K562 (cell line): ENCODE measurements at regions of chr3 and their contacts with region 1.

Region 1: GRCh38 chr3:186760141-186760813 is 23.1 kb upstream of the EIF4A2 start:
- DNase-seq: no peak
- ATAC-seq: no peak
- H3K4me3 ChIP-seq: no peak overlapping the region
- H3K27ac ChIP-seq: no peak overlapping the region
- H3K4me1 ChIP-seq: peaks cover 0 to 2% of the 10 kb centered on the region in 2 experiments; a peak in 2 of 5 replicates
- H3K27me3 ChIP-seq: peaks cover 2 to 11% of the 10 kb centered on the region in 2 experiments; a peak in 3 of 5 replicates
- CTCF ChIP-seq: no peak
- EP300 ChIP-seq: no peak
- POLR2A ChIP-seq: no peak
- RAD21 ChIP-seq: no peak

Region 2: GRCh38 chr3:186694288-186695032 is 65.8 kb before region 1 on chr3:
- CTCF ChIA-PET with region 1: no interaction called
- POLR2A ChIA-PET with region 1: no interaction called
- in situ Hi-C with region 1: no loop called
- intact Hi-C with region 1: no loop called
- DNase-seq: no peak
- ATAC-seq: no peak
- H3K4me3 ChIP-seq: no peak overlapping the region
- H3K27ac ChIP-seq: no peak overlapping the region
- H3K4me1 ChIP-seq: peaks cover 0 to 5% of the 10 kb centered on the region in 2 experiments; a peak in 2 of 5 replicates
- H3K27me3 ChIP-seq: peaks cover 8 to 21% of the 10 kb centered on the region in 2 experiments
- CTCF ChIP-seq: no peak
- EP300 ChIP-seq: no peak
- POLR2A ChIP-seq: no peak
- RAD21 ChIP-seq: no peak

Region 3: DNA sequence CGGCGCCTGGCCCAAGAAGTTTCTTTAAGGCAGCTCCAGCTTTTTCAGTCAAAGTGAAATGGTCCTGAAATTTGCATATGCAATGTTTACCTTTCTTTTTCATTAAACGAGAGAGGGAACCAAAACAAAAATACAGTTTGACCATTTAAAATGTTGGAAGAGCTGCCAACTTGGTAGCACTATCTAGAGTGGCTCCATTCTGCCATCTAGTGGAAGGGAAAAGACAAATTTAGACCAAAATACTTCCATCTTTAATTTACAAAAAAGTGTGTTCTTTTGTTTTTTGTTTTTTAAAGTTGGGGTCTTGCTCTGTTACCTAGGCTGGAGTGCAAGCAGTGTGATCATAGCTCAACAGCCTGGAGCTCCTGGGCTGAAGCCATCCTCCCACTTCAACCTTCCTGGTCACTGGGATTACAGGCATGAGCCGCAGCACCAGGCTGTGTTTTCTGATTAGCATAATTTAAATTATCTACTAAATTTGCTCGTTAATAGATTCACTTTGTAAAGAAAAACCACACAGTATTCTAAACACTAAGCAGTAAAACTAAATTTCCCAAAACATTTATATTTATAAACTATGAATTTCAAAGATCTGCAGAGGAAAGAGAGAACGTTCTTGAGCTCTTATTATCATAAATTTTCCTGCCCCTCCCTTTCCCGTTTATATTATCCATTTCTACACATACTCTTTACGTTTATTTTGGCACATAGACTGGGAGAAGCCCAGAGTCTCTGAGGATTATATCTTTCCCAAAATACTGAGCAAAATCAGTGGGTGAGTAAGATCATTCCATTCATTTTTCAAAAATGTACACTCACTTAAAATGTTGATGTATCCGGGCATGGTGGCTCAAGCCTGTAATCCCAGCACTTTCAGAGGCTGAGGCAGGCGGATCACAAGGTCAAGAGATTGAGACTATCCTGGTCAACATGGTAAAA is 61.4 kb after region 1 on chr3:
- CTCF ChIA-PET with region 1: no interaction called
- POLR2A ChIA-PET with region 1: interaction called, 3 read pairs
- in situ Hi-C with region 1: no loop called
- intact Hi-C with region 1: loop called (anchors 5 kb)
- DNase-seq: peak in 3 of 4 experiments; percentile 26 to 76 (median 36)
- ATAC-seq: no peak
- H3K4me3 ChIP-seq: no peak overlapping the region
- H3K27ac ChIP-seq: no peak overlapping the region
- H3K4me1 ChIP-seq: peaks cover 19 to 25% of the 10 kb centered on the region in 2 experiments; a peak in 4 of 5 replicates
- H3K27me3 ChIP-seq: no peaks in the 10 kb centered on the region
- CTCF ChIP-seq: peak; percentile 54 to 84 (median 67); a peak in 5 of 6 replicates
- EP300 ChIP-seq: no peak
- POLR2A ChIP-seq: no peak
- RAD21 ChIP-seq: peak; percentile 74 to 84